ENCODE measurements at regions of chr6 and their contacts with region 1.

Region 1: GRCh38 chr6:7243179-7243981 is 69.6 kb downstream of the SSR1 start:
- DNase-seq: peak; percentile 54 to 76 (median 62)
- H3K4me3 ChIP-seq: peak overlapping the region in 1 of 3 experiments; percentile 35
- H3K4me3 Mint-ChIP-seq: peak overlapping the region in 1 of 2 donors; percentile 56
- H3K27ac ChIP-seq: peak overlapping the region; percentile 52 to 67
- H3K27ac Mint-ChIP-seq: peak overlapping the region; percentile 78 to 98 (median 92)
- H3K4me1 ChIP-seq: peaks cover 19 to 28% of the 10 kb centered on the region in 2 donors
- H3K4me1 Mint-ChIP-seq: peaks cover 30% of the 10 kb centered on the region
- H3K27me3 ChIP-seq: no peaks in the 10 kb centered on the region
- H3K27me3 Mint-ChIP-seq: peaks cover 0 to 3% (median 3%) of the 10 kb centered on the region in 3 donors
- CTCF ChIP-seq: peak; percentile 91

Region 2: GRCh38 chr6:6676910-6677441 is 566.4 kb before region 1 on chr6:
- intact Hi-C with region 1: loop called (anchors 5 to 10 kb)
- DNase-seq: peak; percentile 75 to 85 (median 79)
- H3K4me3 ChIP-seq: peak overlapping the region in 1 of 3 experiments; percentile 38
- H3K4me3 Mint-ChIP-seq: peak overlapping the region; percentile 17 to 62
- H3K27ac ChIP-seq: peak overlapping the region; percentile 46 to 81
- H3K27ac Mint-ChIP-seq: peak overlapping the region; percentile 25 to 90 (median 77)
- H3K4me1 ChIP-seq: peaks cover 30 to 44% of the 10 kb centered on the region in 2 donors
- H3K4me1 Mint-ChIP-seq: peaks cover 52% of the 10 kb centered on the region
- H3K27me3 ChIP-seq: no peaks in the 10 kb centered on the region
- H3K27me3 Mint-ChIP-seq: peaks cover 0 to 1% (median 0%) of the 10 kb centered on the region in 3 donors
- CTCF ChIP-seq: peak; percentile 98

Region 3: GRCh38 chr6:6696867-6697531 is 546.4 kb before region 1 on chr6:
- intact Hi-C with region 1: loop called in 1 of 2 experiments (anchors 10 kb)
- DNase-seq: peak; percentile 66 to 84 (median 81)
- H3K4me3 ChIP-seq: no peak overlapping the region
- H3K4me3 Mint-ChIP-seq: no peak overlapping the region
- H3K27ac ChIP-seq: peak overlapping the region; percentile 1 to 81
- H3K27ac Mint-ChIP-seq: peak overlapping the region; percentile 33 to 91 (median 78)
- H3K4me1 ChIP-seq: peaks cover 74 to 85% of the 10 kb centered on the region in 2 donors
- H3K4me1 Mint-ChIP-seq: peaks cover 78% of the 10 kb centered on the region
- H3K27me3 ChIP-seq: no peaks in the 10 kb centered on the region
- H3K27me3 Mint-ChIP-seq: no peaks in the 10 kb centered on the region
- CTCF ChIP-seq: peak; percentile 80

Region 4: GRCh38 chr6:6788394-6789020 is 454.9 kb before region 1 on chr6:
- intact Hi-C with region 1: loop called in 1 of 2 experiments (anchors 10 kb)
- DNase-seq: peak; percentile 40 to 65 (median 56)
- H3K4me3 ChIP-seq: no peak overlapping the region
- H3K4me3 Mint-ChIP-seq: no peak overlapping the region
- H3K27ac ChIP-seq: no peak overlapping the region
- H3K27ac Mint-ChIP-seq: peak overlapping the region in 1 of 7 donors; percentile 36
- H3K4me1 ChIP-seq: peaks cover 10 to 14% of the 10 kb centered on the region in 2 donors
- H3K4me1 Mint-ChIP-seq: peaks cover 34% of the 10 kb centered on the region
- H3K27me3 ChIP-seq: no peaks in the 10 kb centered on the region
- H3K27me3 Mint-ChIP-seq: peaks cover 0 to 3% (median 0%) of the 10 kb centered on the region in 3 donors
- CTCF ChIP-seq: peak; percentile 92

Region 5: DNA sequence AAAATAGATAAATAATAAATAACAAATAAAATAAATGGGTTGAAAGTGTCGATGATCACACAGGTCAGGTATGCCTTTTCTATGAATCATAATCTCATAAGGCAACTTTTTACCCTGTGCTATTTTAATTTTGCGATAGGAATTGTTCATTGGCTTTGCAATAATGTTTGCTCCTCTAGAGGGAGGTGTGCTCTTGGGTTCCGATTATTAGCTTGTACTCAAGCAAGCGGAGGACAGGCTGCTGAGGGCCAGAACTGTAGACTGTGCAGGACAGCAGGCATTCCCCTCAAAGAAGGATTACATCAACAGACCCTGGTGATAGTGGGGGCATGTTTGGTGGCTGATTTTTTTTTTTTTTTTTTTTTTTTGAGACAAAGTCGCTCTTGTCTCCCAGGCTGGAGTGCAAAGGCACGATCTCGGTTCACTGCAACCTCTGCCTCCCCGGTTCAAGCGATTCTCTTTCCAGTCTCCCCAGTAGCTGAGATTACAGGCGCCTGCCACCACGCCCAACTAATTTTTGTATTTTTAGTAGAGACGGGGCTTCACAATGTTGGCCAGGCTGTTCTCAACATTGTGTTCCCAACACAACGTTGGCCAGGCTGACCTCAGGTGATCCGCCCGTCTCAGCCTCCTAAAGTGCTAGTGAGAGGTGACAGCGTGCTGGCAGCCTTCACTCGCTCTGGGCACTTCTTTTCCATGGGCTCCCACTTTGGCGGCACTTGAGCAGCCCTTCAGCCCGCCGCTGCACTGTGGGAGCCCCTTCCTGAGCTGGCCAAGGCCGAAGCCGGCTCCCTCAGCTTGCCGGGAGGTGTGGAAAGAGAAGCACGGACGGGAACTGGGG is 181.8 kb after region 1 on chr6:
- intact Hi-C with region 1: no loop called
- DNase-seq: peak in 2 of 3 donors; percentile 19 to 33
- H3K4me3 ChIP-seq: no peak overlapping the region
- H3K4me3 Mint-ChIP-seq: no peak overlapping the region
- H3K27ac ChIP-seq: no peak overlapping the region
- H3K27ac Mint-ChIP-seq: no peak overlapping the region
- H3K4me1 ChIP-seq: no peaks in the 10 kb centered on the region
- H3K4me1 Mint-ChIP-seq: peaks cover 2% of the 10 kb centered on the region
- H3K27me3 ChIP-seq: no peaks in the 10 kb centered on the region
- H3K27me3 Mint-ChIP-seq: peaks cover 0 to 2% (median 0%) of the 10 kb centered on the region in 3 donors
- CTCF ChIP-seq: peak; percentile 32

Measured in CD14-positive monocyte (primary cell).